Right lobe of liver (tissue), 6 donors: ENCODE measurements at regions of chr17 and their contacts with region 1.

Region 1: GRCh38 chr17:81706757-81707624 is 3.8 kb downstream of the MRPL12 start:
- DNase-seq: no peak
- ATAC-seq: no peak
- H3K4me3 ChIP-seq: no peak overlapping the region
- H3K27ac ChIP-seq: no peak overlapping the region
- H3K4me1 ChIP-seq: peaks cover 0 to 32% (median 12%) of the 10 kb centered on the region in 4 donors
- H3K27me3 ChIP-seq: no peaks in the 10 kb centered on the region
- CTCF ChIP-seq: no peak
- POLR2A ChIP-seq: no peak

Region 2: DNA sequence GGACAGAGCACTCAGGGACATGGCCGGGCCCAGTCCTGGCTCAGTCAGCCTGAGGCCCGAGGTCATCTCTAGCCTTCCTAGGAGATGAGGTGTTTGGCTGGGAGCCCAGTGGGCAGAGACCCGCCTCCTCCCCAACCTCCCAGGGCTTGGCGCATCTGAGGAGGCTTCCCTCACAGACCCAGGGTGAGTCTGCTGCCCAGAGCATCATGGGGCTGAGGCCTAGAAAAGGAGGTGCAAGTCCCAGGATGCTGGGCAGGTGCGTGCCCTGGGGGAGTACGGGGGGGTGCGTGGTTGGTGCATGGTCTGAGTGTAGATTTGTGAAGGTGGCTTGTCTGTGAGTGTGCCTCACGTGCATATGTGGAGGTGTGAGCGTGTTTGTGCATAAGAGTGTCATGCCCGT is 55.3 kb before region 1 on chr17:
- intact Hi-C with region 1: no loop called
- DNase-seq: no peak
- ATAC-seq: no peak
- H3K4me3 ChIP-seq: no peak overlapping the region
- H3K27ac ChIP-seq: no peak overlapping the region
- H3K4me1 ChIP-seq: no peaks in the 10 kb centered on the region
- H3K27me3 ChIP-seq: peaks cover 0 to 11% of the 10 kb centered on the region in 2 donors
- CTCF ChIP-seq: no peak
- POLR2A ChIP-seq: no peak

Region 3: GRCh38 chr17:81672504-81672903 is 34.5 kb before region 1 on chr17:
- intact Hi-C with region 1: loop called in 1 of 2 experiments (anchors 5 kb)
- DNase-seq: peak in 1 of 3 donors; percentile 20
- ATAC-seq: peak in 1 of 4 donors; percentile 5
- H3K4me3 ChIP-seq: no peak overlapping the region
- H3K27ac ChIP-seq: no peak overlapping the region
- H3K4me1 ChIP-seq: peaks cover 0 to 5% (median 0%) of the 10 kb centered on the region in 4 donors
- H3K27me3 ChIP-seq: no peaks in the 10 kb centered on the region
- CTCF ChIP-seq: no peak
- POLR2A ChIP-seq: no peak

Region 4: DNA sequence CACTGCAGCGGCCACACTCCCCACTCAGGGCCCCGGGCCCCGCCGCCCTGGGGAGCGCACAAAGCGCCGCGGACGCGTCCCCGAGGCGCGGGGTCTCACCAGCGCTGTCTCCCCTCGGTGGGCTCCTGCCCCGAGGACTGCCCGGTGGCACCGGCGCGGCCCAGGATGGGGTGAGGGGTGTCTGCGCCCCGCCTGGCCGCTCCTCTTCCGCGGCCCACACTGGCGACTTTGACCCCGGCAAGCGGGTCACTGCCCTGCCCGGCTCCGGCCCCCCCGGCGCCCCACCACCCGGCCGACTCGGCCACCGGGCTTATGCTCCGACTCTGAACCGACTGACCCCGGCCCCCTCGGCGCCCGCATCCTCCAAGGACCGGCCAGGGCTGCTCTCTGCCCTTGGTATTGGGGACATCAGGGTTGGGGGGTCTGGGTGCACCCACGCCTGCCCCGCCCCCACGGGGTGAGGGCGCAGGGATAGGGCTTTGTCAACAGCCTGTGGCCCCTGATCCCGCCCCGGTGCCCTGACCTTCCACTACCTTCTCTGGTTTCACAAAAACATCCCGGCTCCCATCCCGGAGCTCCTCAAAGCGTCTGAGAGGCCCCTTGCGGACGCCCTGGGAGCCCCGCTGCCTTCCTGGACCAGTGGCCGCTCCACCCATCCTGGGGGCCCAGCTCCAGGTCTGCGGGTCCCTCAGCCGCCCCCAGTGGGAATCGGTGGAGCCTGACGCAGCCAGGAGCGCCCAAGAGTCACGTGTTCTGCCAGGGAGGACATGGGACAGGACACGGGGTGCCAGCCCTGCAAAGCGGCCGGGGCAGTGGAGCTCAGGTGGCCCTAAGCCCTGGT is 97.8 kb after region 1 on chr17:
- intact Hi-C with region 1: no loop called
- DNase-seq: peak; percentile 57 to 87 (median 82)
- ATAC-seq: peak; percentile 68 to 78 (median 76)
- H3K4me3 ChIP-seq: peak overlapping the region; percentile 54 to 86 (median 70)
- H3K27ac ChIP-seq: peak overlapping the region in 2 of 3 donors; percentile 79 to 80
- H3K4me1 ChIP-seq: peaks cover 0 to 17% (median 6%) of the 10 kb centered on the region in 4 donors
- H3K27me3 ChIP-seq: no peaks in the 10 kb centered on the region
- CTCF ChIP-seq: no peak
- POLR2A ChIP-seq: no peak

Region 5: DNA sequence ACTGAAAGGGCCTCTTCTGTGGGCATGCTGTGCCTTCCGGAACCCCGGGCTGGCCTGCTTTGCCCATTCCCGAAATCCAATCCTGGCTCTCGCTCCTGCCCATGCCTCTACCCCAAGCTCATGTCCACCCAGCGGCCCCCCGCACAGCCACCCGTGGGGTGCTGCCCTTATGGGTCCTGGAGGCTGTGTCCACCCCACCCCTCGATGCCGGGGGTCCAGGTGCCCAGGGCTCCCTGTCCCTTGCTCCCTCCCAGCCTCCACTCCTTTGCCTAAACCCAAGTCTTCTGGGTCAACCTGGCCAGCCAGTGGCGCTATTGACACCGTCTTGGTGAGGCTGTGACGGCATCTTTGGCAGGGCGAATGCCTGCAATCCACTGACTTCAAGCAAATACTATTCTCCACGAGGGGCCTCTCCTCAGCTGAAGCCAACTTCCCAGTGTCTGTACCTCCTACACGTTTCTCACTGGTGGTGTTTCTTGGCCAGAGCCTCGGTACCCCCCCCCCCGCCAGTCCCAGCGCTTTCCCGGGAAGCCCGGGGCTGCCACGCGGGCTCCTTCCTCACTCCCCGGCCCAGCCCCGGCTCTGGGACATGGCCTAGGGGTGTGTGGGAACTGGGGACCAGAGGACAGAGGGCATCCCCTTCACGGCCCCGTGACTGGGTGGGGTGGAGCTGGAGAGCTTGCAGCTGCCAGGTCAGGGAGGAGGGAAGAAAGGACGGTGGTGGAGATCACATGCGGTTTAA is 370.8 kb after region 1 on chr17:
- intact Hi-C with region 1: no loop called
- DNase-seq: no peak
- ATAC-seq: peak; percentile 7 to 29 (median 22)
- H3K4me3 ChIP-seq: no peak overlapping the region
- H3K27ac ChIP-seq: no peak overlapping the region
- H3K4me1 ChIP-seq: no peaks in the 10 kb centered on the region
- H3K27me3 ChIP-seq: no peaks in the 10 kb centered on the region
- CTCF ChIP-seq: no peak
- POLR2A ChIP-seq: no peak